Right ventricle myocardium superior (tissue), 1 donor: ENCODE measurements at regions of chr3 and their contacts with region 1.

Region 1: DNA sequence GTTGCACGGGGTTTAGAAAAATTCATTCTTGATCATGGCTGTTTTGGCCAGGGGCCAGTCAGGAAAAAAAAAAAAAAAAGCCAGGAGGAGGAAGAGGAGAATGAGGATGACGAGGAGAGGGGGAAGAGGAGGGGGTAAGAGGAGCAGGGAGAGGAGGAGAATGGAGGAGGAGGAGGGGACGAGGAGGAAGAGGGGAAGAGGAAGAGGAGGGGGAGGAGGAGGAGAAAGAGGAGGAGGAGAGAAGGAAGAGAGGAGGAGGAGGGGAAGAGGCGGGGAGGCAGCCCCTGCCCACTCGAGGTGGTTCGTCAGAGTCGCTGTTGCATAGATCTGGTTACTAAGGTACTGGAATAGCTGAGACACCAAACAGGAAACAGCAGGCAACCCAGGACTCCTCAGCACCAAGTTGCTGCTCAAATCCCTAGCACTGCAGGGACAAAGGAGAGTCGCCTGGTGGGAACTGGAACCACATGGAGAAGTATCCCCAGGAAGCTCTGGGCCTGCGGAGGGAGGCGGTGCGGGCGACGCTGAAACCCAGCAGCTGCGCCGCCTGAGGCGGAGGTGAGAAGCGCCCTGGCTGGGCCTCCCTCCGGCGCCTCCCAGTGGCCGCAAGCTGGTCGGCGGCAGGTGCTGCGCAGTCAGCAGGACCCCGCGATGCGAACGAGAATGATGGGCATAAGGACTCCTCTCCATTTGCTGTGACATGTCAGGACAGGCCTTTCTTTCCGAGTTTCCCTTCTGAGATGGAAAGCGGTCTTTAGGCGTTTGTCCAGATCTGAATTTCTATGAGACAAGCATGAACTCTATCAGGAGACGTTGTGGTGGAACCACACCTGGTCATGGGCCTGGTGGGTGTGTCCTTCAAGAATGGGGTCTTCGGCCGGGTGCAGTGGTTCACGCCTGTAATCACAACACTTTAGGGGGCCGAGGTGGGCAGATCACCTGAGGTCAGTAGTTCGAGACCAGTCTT is 17.5 kb downstream of the FAM240A start:
- DNase-seq: peak; percentile 90
- ATAC-seq: peak; percentile 94

Region 2: GRCh38 chr3:46488735-46489361 is 141.0 kb before region 1 on chr3:
- intact Hi-C with region 1: loop called (anchors 5 kb)
- DNase-seq: peak; percentile 94
- ATAC-seq: peak; percentile 94

Region 3: GRCh38 chr3:47022641-47023071 is 392.8 kb after region 1 on chr3:
- intact Hi-C with region 1: no loop called
- DNase-seq: no peak
- ATAC-seq: peak; percentile 70